Activated CD8-positive, alpha-beta memory T cell treated with anti-CD3 and anti-CD28 coated beads, Interleukin-2, amount 10 ng/mL, durations not matched to agents 7 days and 5 days (primary cell): ENCODE measurements at regions of chr3 and their contacts with region 1.

Region 1: GRCh38 chr3:16884084-16884747 is 539 bp upstream of the PLCL2 start:
- DNase-seq: peak; percentile 79
- ATAC-seq: peak; percentile 46
- H3K4me3 Mint-ChIP-seq: peak overlapping the region; percentile 99
- H3K27ac Mint-ChIP-seq: peak overlapping the region; percentile 96
- H3K4me1 Mint-ChIP-seq: peaks cover 21% of the 10 kb centered on the region
- H3K27me3 Mint-ChIP-seq: peaks cover 2% of the 10 kb centered on the region

Region 2: DNA sequence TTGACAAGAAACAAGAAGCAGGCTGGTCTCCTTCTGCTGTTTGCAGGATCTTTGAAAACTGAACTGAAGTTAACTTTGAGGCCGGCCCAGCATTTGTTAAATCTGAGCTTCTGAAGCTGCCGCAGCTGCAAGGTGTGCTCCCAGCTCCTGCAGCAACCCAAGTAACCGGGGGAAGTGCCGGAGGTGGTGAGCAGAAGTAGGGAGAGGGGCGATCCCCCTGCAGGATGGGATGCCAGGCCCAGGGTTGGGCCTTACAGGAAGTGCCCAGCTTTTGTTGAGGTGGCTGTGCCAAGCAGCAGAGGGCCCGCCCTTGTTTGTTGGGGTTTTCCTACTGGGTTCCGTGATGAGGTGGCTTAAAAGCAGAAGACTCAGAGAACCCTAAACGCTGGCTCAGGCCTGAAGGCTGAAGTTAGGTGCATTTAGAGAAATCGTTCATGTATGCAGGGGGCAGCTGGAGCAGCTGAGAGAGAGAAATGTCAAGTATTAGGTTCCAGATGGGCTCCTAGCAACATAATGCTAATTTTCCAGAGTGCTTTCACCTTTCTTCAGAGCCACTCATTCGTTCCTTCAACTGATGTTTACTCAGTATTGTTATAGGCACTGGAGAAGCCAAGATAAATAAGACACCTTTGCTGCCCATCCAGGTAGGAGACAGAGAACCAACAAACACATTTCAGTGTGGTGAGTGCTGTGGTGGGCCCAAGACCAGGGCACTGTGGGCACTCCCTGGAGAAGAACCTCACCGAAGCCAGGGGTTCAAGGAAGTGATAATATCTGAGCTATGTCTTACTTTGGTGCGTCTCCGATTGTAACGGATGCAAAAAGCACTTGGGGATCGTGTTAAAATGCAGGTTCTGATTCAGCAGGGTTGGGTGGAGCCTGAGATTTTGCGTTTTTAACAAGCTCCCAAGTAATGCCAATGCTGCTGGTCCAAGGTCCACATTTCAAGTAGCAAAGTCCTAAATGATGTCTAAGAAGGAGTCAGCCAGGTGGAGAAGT is 41.6 kb before region 1 on chr3:
- CTCF ChIA-PET with region 1: interaction called, 15 read pairs
- DNase-seq: peak; percentile 89
- ATAC-seq: peak; percentile 89
- H3K4me3 Mint-ChIP-seq: peak overlapping the region; percentile 64
- H3K27ac Mint-ChIP-seq: peak overlapping the region; percentile 95
- H3K4me1 Mint-ChIP-seq: peaks cover 59% of the 10 kb centered on the region
- H3K27me3 Mint-ChIP-seq: no peaks in the 10 kb centered on the region

Region 3: GRCh38 chr3:16849229-16849628 is 35.0 kb before region 1 on chr3:
- CTCF ChIA-PET with region 1: interaction called, 19 read pairs
- DNase-seq: peak; percentile 87
- ATAC-seq: peak; percentile 91
- H3K4me3 Mint-ChIP-seq: peak overlapping the region; percentile 49
- H3K27ac Mint-ChIP-seq: peak overlapping the region; percentile 77
- H3K4me1 Mint-ChIP-seq: peaks cover 28% of the 10 kb centered on the region
- H3K27me3 Mint-ChIP-seq: no peaks in the 10 kb centered on the region

Region 4: DNA sequence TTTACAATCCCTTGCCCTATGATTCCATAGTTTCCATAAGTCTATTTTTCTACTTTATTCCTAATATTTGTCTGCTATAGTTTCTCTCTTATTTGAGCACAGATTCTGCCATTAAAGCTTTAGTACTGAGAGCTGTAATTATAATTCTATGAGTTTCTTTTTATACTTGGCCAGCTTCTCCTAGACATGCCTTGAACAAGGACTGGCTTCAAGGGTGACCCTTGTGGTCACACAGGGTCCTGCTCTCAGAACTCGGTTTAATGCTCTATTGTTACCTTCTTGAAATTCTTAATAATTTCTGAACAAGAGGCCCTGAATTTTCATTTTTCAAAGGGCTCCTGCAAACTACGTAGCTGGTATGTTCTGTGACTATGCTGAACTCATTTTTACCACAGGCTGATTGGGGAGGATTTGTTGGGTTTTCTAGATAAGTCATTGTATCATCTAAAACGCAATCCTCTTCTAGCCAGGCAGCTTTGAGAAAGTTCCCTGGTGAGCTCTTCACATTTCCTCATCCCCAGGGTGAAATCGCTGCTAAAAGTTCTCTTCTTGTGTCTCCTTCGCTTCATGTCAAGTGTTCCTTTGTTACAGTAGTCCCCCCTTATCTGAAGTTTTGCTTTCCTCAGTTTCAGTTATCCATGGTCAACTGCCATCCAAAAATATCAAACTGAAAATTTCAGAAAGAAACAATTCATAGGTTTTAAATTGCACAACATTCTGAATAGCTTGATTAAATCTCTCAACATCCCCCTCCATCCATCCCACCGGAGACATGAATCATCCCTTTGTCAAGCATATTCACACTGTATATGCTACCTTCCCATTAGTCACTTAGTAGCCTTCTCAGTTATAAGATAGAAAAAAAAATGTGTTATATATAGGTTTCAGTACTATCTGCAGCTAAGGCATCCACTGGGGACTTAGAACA is 12.0 kb before region 1 on chr3:
- CTCF ChIA-PET with region 1: interaction called, 11 read pairs
- DNase-seq: no peak
- ATAC-seq: no peak
- H3K4me3 Mint-ChIP-seq: no peak overlapping the region
- H3K27ac Mint-ChIP-seq: no peak overlapping the region
- H3K4me1 Mint-ChIP-seq: no peaks in the 10 kb centered on the region
- H3K27me3 Mint-ChIP-seq: peaks cover 1% of the 10 kb centered on the region

Region 5: GRCh38 chr3:17115186-17115585 is 231.0 kb after region 1 on chr3:
- CTCF ChIA-PET with region 1: no interaction called
- DNase-seq: no peak
- ATAC-seq: no peak
- H3K4me3 Mint-ChIP-seq: no peak overlapping the region
- H3K27ac Mint-ChIP-seq: no peak overlapping the region
- H3K4me1 Mint-ChIP-seq: no peaks in the 10 kb centered on the region
- H3K27me3 Mint-ChIP-seq: no peaks in the 10 kb centered on the region

Region 6: DNA sequence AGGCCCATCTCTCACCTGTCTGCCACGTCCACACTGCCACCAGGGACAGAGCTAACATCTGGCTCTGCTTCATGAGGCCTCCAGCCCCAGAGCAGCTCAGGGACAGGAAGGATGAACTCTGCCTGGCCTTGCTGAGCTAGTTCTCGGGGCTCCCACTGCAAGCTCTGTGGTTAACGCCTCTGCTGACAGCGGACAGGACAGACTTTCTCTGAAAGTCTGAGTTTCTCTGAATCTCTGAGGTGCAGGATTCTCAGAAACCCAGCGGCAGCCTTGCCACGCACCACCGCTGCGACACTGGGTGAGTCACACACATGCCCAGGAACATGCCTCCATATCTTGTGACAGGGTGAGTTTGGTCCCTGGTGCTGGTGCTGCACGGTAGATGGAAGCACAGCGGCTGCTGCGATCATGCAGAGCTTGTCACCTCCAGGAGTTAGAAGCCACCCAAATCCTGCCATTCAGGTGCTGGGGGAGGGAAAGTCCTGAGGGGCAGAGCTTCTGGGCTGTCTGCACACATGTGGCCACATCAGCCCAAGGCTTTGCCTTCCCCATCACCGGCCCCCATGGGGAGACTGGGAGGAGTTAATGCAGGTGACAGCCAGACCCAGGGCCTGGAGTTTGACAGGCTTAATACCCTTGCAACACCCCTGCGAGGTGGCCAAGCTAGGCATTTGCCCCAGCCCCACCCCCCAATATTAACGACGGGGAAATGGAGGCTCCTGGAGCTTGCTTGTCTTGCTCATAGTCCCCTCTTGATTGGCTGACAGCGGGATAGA is 267.6 kb after region 1 on chr3:
- CTCF ChIA-PET with region 1: interaction called, 12 read pairs
- DNase-seq: peak; percentile 98
- ATAC-seq: peak; percentile 93
- H3K4me3 Mint-ChIP-seq: peak overlapping the region; percentile 59
- H3K27ac Mint-ChIP-seq: peak overlapping the region; percentile 92
- H3K4me1 Mint-ChIP-seq: peaks cover 74% of the 10 kb centered on the region
- H3K27me3 Mint-ChIP-seq: no peaks in the 10 kb centered on the region